HepG2 (cell line): ENCODE measurements at regions of chr4 and their contacts with region 1.

Region 1: GRCh38 chr4:15001869-15002658 is at the start of gene CPEB2:
- DNase-seq: peak; percentile 86
- ATAC-seq: peak; percentile 84
- H3K4me3 ChIP-seq: peak within 1 kb of the TSS; percentile 81 to 97 (median 97)
- H3K27ac ChIP-seq: peak within 1 kb of the TSS; percentile 97
- H3K4me1 ChIP-seq: peaks cover 13% of the 10 kb centered on the region
- H3K27me3 ChIP-seq: no peaks in the 10 kb centered on the region; a peak in 2 of 5 replicates
- CTCF ChIP-seq: 0 out of 2 replicates have a peak, but pooled peaks have one; percentile 1
- EP300 ChIP-seq: 0 out of 4 replicates have a peak, but pooled peaks of 1 of the 2 experiments have one; percentile 6
- POLR2A ChIP-seq: peak in 1 of 2 experiments; percentile 85; a peak in 2 of 4 replicates
- RAD21 ChIP-seq: peak; percentile 16
- total RNA-seq, gene CPEB2: 2.5 and 3.7 TPM in 2 replicates

Region 2: GRCh38 chr4:14545163-14545562 is 456.9 kb before region 1 on chr4:
- CTCF ChIA-PET with region 1: no interaction called
- POLR2A ChIA-PET with region 1: no interaction called
- in situ Hi-C with region 1: no loop called
- intact Hi-C with region 1: no loop called
- DNase-seq: no peak
- ATAC-seq: no peak
- H3K4me3 ChIP-seq: no peak overlapping the region
- H3K27ac ChIP-seq: no peak overlapping the region
- H3K4me1 ChIP-seq: no peaks in the 10 kb centered on the region
- H3K27me3 ChIP-seq: no peaks in the 10 kb centered on the region
- CTCF ChIP-seq: no peak
- EP300 ChIP-seq: no peak
- POLR2A ChIP-seq: no peak
- RAD21 ChIP-seq: no peak

Region 3: DNA sequence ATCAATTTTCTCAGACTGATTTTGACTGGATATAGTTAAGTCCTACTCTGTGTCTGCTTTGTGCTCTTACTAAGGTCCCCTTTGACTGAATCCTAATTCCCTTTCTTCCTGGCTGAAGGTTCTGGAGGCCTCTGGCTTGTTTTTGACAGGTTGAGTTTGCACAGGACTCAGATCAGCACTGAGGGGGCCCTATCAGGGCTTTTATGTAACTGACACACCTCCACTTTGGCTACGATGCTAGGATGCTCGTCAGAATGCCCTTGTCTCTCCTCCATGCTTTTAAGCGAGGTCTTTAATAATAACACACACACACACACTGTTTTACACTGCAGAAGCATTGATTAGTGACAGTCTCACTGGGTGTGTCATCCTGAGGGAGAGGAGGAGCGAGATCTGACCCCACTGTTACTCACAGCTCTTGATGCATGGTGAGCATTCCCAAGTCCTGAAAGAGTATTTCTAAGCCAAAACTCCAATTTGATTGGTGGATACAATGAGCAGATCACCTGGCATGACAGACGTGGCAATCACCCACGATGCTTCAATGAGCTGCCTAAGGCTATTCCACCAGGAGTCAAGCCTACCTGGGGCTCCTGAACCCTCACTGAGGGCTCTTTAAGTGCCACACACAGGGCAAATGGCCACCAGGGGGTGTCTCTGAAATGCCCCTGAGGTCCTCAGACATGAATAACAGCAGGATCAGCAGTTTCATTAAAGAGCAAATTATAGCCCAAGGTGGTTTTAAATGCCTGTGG is 130.2 kb before region 1 on chr4:
- CTCF ChIA-PET with region 1: no interaction called
- POLR2A ChIA-PET with region 1: no interaction called
- in situ Hi-C with region 1: no loop called
- intact Hi-C with region 1: loop called (anchors 5 kb)
- DNase-seq: peak; percentile 3
- ATAC-seq: peak; percentile 91
- H3K4me3 ChIP-seq: no peak overlapping the region
- H3K27ac ChIP-seq: no peak overlapping the region
- H3K4me1 ChIP-seq: peaks cover 11% of the 10 kb centered on the region
- H3K27me3 ChIP-seq: no peaks in the 10 kb centered on the region
- CTCF ChIP-seq: peak; percentile 34; the same call in 1 of the 2 replicates
- EP300 ChIP-seq: no peak
- POLR2A ChIP-seq: no peak
- RAD21 ChIP-seq: no peak

Region 4: GRCh38 chr4:14888790-14889572 is 113.1 kb before region 1 on chr4:
- CTCF ChIA-PET with region 1: no interaction called
- POLR2A ChIA-PET with region 1: no interaction called
- in situ Hi-C with region 1: no loop called
- intact Hi-C with region 1: no loop called
- DNase-seq: no peak
- ATAC-seq: no peak
- H3K4me3 ChIP-seq: no peak overlapping the region
- H3K27ac ChIP-seq: no peak overlapping the region
- H3K4me1 ChIP-seq: no peaks in the 10 kb centered on the region
- H3K27me3 ChIP-seq: no peaks in the 10 kb centered on the region
- CTCF ChIP-seq: no peak
- EP300 ChIP-seq: no peak
- POLR2A ChIP-seq: no peak
- RAD21 ChIP-seq: no peak

Region 5: DNA sequence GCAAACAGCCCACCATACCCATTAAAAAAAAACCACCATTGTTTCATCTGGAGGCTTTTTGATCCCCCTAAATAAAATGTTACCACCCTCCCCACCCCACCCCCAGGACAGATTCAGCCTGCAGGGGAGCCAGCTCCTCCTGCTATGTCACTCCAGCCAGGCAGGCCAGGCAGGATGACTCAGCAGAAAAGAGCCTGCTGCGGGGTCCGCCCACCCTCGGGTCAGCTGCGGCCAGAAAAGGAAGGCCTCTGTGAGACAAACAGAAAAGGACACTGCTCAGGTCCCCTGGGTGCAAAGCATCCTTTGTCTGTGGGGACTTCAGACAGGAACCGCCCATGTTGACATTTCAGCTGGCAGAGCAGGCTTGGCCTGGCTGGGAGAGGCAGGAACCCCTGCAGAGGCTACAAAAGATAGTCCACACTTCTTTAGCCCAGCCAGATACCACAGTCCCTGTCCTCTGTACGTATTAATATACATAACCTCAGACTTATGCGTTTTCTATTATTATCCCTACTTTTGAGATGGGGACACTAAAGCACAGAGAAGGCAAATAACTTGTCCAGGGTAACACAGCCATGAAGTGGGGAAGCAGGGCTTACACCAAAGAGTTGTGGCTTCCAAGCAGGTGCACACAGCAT is 147.9 kb after region 1 on chr4:
- CTCF ChIA-PET with region 1: no interaction called
- POLR2A ChIA-PET with region 1: interaction called, 3 read pairs
- in situ Hi-C with region 1: loop called (anchors 10 kb)
- intact Hi-C with region 1: loop called (anchors 5 kb)
- DNase-seq: peak; percentile 93
- ATAC-seq: peak; percentile 97
- H3K4me3 ChIP-seq: no peak overlapping the region
- H3K27ac ChIP-seq: peak overlapping the region; percentile 47
- H3K4me1 ChIP-seq: peaks cover 54% of the 10 kb centered on the region
- H3K27me3 ChIP-seq: no peaks in the 10 kb centered on the region
- CTCF ChIP-seq: 0 out of 2 replicates have a peak, but pooled peaks have one; percentile 17
- EP300 ChIP-seq: peak; percentile 46 to 79; a peak in 3 of 4 replicates
- POLR2A ChIP-seq: 0 out of 4 replicates have a peak, but pooled peaks of 1 of the 2 experiments have one; percentile 36
- RAD21 ChIP-seq: peak; percentile 22; the same call in 1 of the 2 replicates

Region 6: GRCh38 chr4:15655229-15656037 is 653.4 kb after region 1 on chr4 and contains the start of gene FBXL5:
- CTCF ChIA-PET with region 1: no interaction called
- POLR2A ChIA-PET with region 1: no interaction called
- in situ Hi-C with region 1: loop called (anchors 25 kb)
- intact Hi-C with region 1: loop called (anchors 10 kb)
- DNase-seq: peak; percentile 56
- ATAC-seq: peak; percentile 76
- H3K4me3 ChIP-seq: peak within 1 kb of the TSS; percentile 71 to 98 (median 90)
- H3K27ac ChIP-seq: peak within 1 kb of the TSS; percentile 85
- H3K4me1 ChIP-seq: peaks cover 45% of the 10 kb centered on the region
- H3K27me3 ChIP-seq: no peaks in the 10 kb centered on the region; a peak in 1 of 5 replicates
- CTCF ChIP-seq: peak; percentile 23; the same call in 1 of the 2 replicates
- EP300 ChIP-seq: no peak
- POLR2A ChIP-seq: peak; percentile 73 to 91
- RAD21 ChIP-seq: no peak; the same call in 1 of the 2 replicates
- total RNA-seq, gene FBXL5: 45.3 and 53.4 TPM in 2 replicates